ENCODE measurements at regions of chr12 and their contacts with region 1.

Region 1: GRCh38 chr12:46401662-46402061 is 29.1 kb upstream of the SLC38A2 start:
- DNase-seq: no peak
- H3K4me3 ChIP-seq: no peak overlapping the region
- H3K27ac ChIP-seq: peak overlapping the region in 3 of 4 donors; percentile 69 to 81 (median 76)
- H3K4me1 ChIP-seq: peaks cover 0 to 49% (median 41%) of the 10 kb centered on the region in 4 donors
- H3K27me3 ChIP-seq: no peaks in the 10 kb centered on the region
- CTCF ChIP-seq: peak in 3 of 4 experiments; percentile 27 to 51 (median 36)
- EP300 ChIP-seq: no peak
- POLR2A ChIP-seq: no peak

Region 2: GRCh38 chr12:46459861-46460545 is 58.3 kb after region 1 on chr12:
- intact Hi-C with region 1: loop called (anchors 5 kb)
- DNase-seq: no peak
- H3K4me3 ChIP-seq: no peak overlapping the region
- H3K27ac ChIP-seq: no peak overlapping the region
- H3K4me1 ChIP-seq: peaks cover 0 to 36% (median 15%) of the 10 kb centered on the region in 4 donors
- H3K27me3 ChIP-seq: no peaks in the 10 kb centered on the region
- CTCF ChIP-seq: no peak
- EP300 ChIP-seq: no peak
- POLR2A ChIP-seq: no peak

Region 3: GRCh38 chr12:46556105-46556559 is 154.5 kb after region 1 on chr12:
- intact Hi-C with region 1: loop called (anchors 5 kb)
- DNase-seq: no peak
- H3K4me3 ChIP-seq: no peak overlapping the region
- H3K27ac ChIP-seq: peak overlapping the region; percentile 35 to 82 (median 72)
- H3K4me1 ChIP-seq: peaks cover 0 to 71% (median 44%) of the 10 kb centered on the region in 4 donors
- H3K27me3 ChIP-seq: no peaks in the 10 kb centered on the region
- CTCF ChIP-seq: no peak
- EP300 ChIP-seq: peak in 1 of 4 donors; percentile 72
- POLR2A ChIP-seq: no peak

Region 4: GRCh38 chr12:47039756-47040155 is 638.1 kb after region 1 on chr12:
- intact Hi-C with region 1: no loop called
- DNase-seq: no peak
- H3K4me3 ChIP-seq: no peak overlapping the region
- H3K27ac ChIP-seq: no peak overlapping the region
- H3K4me1 ChIP-seq: peaks cover 0 to 5% (median 2%) of the 10 kb centered on the region in 4 donors
- H3K27me3 ChIP-seq: no peaks in the 10 kb centered on the region
- CTCF ChIP-seq: no peak
- EP300 ChIP-seq: no peak
- POLR2A ChIP-seq: no peak

Measured in sigmoid colon (tissue), 7 donors.